ENCODE measurements at regions of chr1 and their contacts with region 1.

Region 1: GRCh38 chr1:37883671-37884070 is 24.3 kb upstream of the MTF1 start:
- DNase-seq: no peak
- H3K4me3 ChIP-seq: no peak overlapping the region
- H3K27ac ChIP-seq: no peak overlapping the region
- H3K4me1 ChIP-seq: no peaks in the 10 kb centered on the region
- H3K27me3 ChIP-seq: no peaks in the 10 kb centered on the region
- CTCF ChIP-seq: no peak

Region 2: GRCh38 chr1:37978541-37978940 is 94.9 kb after region 1 on chr1:
- intact Hi-C with region 1: loop called (anchors 10 kb)
- DNase-seq: no peak
- H3K4me3 ChIP-seq: no peak overlapping the region
- H3K27ac ChIP-seq: no peak overlapping the region
- H3K4me1 ChIP-seq: no peaks in the 10 kb centered on the region
- H3K27me3 ChIP-seq: no peaks in the 10 kb centered on the region
- CTCF ChIP-seq: no peak